ENCODE measurements at regions of chr7 and their contacts with region 1.

Region 1: GRCh38 chr7:135795846-135796570 is 47.4 kb upstream of the FAM180A start:
- DNase-seq: no peak
- ATAC-seq: no peak
- H3K4me3 ChIP-seq: no peak overlapping the region
- H3K27ac ChIP-seq: peak overlapping the region in 3 of 12 donors; percentile 22 to 53 (median 25)
- H3K4me1 ChIP-seq: peaks cover 0 to 16% (median 2%) of the 10 kb centered on the region in 12 donors
- H3K27me3 ChIP-seq: no peaks in the 10 kb centered on the region
- CTCF ChIP-seq: no peak
- POLR2A ChIP-seq: no peak

Region 2: GRCh38 chr7:135662373-135663114 is 133.5 kb before region 1 on chr7 and contains the start of gene STMP1:
- intact Hi-C with region 1: loop called in 4 of 10 experiments (anchors 5 to 10 kb)
- DNase-seq: peak; percentile 97 to 99 (median 98)
- ATAC-seq: peak; percentile 97 to 99 (median 98)
- H3K4me3 ChIP-seq: peak within 1 kb of the TSS; percentile 72 to 95 (median 86)
- H3K27ac ChIP-seq: peak within 1 kb of the TSS; percentile 69 to 97 (median 94)
- H3K4me1 ChIP-seq: peaks cover 0 to 54% (median 21%) of the 10 kb centered on the region in 12 donors
- H3K27me3 ChIP-seq: no peaks in the 10 kb centered on the region
- CTCF ChIP-seq: peak in 8 of 12 donors; percentile 66 to 93 (median 83)
- POLR2A ChIP-seq: peak in 1 of 2 donors; percentile 94
- total RNA-seq, gene STMP1: 14.7 to 34.7 (median 29.2) TPM

Region 3: GRCh38 chr7:135678612-135679575 is 117.1 kb before region 1 on chr7:
- intact Hi-C with region 1: loop called in 4 of 10 experiments (anchors 5 kb)
- DNase-seq: peak in 2 of 5 donors; percentile 51 to 69
- ATAC-seq: peak; percentile 32 to 66 (median 58)
- H3K4me3 ChIP-seq: no peak overlapping the region
- H3K27ac ChIP-seq: peak overlapping the region in 5 of 12 donors; percentile 3 to 40 (median 20)
- H3K4me1 ChIP-seq: peaks cover 0 to 44% (median 13%) of the 10 kb centered on the region in 12 donors
- H3K27me3 ChIP-seq: no peaks in the 10 kb centered on the region
- CTCF ChIP-seq: no peak
- POLR2A ChIP-seq: no peak

Region 4: DNA sequence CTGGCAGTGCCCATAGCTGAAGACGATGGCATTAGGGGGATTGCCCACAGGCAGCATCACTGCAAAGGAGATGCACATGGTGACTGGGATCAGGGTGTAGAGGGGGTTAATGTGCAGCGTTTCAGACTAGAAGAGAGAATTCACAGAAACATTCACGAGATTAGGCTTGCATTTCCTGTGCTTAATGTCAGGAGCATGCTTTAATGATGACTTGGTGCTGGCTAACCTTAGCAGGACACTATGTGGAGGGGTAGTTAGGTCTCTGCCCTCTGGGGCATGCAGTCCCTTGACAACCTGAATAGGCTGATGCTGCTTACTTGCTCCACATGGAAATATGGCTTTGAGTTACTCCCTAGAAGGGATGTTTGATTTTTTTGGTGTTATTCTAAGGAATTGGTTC is 111.9 kb before region 1 on chr7:
- intact Hi-C with region 1: loop called in 2 of 10 experiments (anchors 5 kb)
- DNase-seq: no peak
- ATAC-seq: peak in 2 of 4 donors; percentile 29 to 40
- H3K4me3 ChIP-seq: no peak overlapping the region
- H3K27ac ChIP-seq: peak overlapping the region in 3 of 12 donors; percentile 15 to 61 (median 17)
- H3K4me1 ChIP-seq: peaks cover 0 to 34% (median 11%) of the 10 kb centered on the region in 12 donors
- H3K27me3 ChIP-seq: no peaks in the 10 kb centered on the region
- CTCF ChIP-seq: no peak
- POLR2A ChIP-seq: no peak

Region 5: GRCh38 chr7:135853499-135853898 is 57.5 kb after region 1 on chr7:
- intact Hi-C with region 1: no loop called
- DNase-seq: no peak
- ATAC-seq: no peak
- H3K4me3 ChIP-seq: no peak overlapping the region
- H3K27ac ChIP-seq: no peak overlapping the region
- H3K4me1 ChIP-seq: peaks cover 0 to 11% (median 0%) of the 10 kb centered on the region in 12 donors
- H3K27me3 ChIP-seq: no peaks in the 10 kb centered on the region
- CTCF ChIP-seq: no peak
- POLR2A ChIP-seq: no peak

Measured in heart left ventricle (tissue), 16 donors.